Activated naive CD8-positive, alpha-beta T cell treated with anti-CD3 and anti-CD28 coated beads, Interleukin-2, amount 10 ng/mL, durations not matched to agents 7 days and 5 days (primary cell): ENCODE measurements at regions of chrX and their contacts with region 1.

Region 1: DNA sequence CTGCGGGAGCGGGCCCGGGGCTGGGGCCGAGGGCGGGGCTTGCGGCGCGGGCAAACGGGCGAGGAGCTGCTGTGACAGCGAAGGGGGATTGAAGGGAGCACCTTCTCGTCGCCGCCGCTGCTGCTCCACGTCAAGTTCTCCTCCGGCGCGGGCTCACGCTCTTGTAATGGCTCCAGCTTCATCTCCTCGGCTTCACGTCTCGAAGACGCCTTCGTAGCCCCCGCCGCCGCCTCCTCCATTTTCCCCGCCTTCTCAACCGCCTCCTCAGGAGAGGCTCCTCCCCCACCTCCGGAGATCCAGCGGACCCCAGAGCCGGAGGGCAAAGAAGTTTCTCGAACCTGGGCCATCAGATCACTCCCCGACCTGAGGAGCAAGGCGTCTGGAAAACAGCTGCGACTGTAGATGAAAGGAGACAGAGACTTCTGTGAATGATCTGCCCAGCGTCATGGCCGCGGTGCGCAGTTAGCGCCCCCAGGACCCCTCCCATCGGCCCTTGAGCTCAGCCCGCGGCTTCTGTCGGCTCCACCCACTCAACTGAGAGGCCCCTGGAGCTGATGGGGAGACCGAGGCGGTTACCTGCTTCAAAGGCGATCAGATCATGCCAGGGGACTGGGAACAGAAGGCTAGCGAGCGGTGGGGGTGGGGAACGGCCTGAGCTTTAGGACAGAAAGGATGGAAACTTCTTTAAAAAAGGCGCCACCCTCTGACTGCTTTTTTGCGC is 895 bp downstream of the USP51 start:
- DNase-seq: peak; percentile 71
- ATAC-seq: peak; percentile 76
- H3K4me3 Mint-ChIP-seq: peak overlapping the region; percentile 93
- H3K27ac Mint-ChIP-seq: peak overlapping the region; percentile 90
- H3K4me1 Mint-ChIP-seq: peaks cover 8% of the 10 kb centered on the region
- H3K27me3 Mint-ChIP-seq: no peaks in the 10 kb centered on the region

Region 2: GRCh38 chrX:55451990-55452832 is 36.5 kb before region 1 on chrX and contains the start of gene MAGEH1:
- POLR2A ChIA-PET with region 1: interaction called, 18 read pairs
- DNase-seq: peak; percentile 71
- ATAC-seq: peak; percentile 97
- H3K4me3 Mint-ChIP-seq: peak within 1 kb of the TSS; percentile 95
- H3K27ac Mint-ChIP-seq: peak within 1 kb of the TSS; percentile 87
- H3K4me1 Mint-ChIP-seq: peaks cover 7% of the 10 kb centered on the region
- H3K27me3 Mint-ChIP-seq: no peaks in the 10 kb centered on the region
- total RNA-seq, gene MAGEH1: 16.0 to 17.9 TPM

Region 3: GRCh38 chrX:55717521-55718497 is 229.1 kb after region 1 on chrX and contains the start of gene RRAGB:
- POLR2A ChIA-PET with region 1: interaction called, 11 read pairs
- DNase-seq: peak; percentile 87
- ATAC-seq: peak; percentile 98
- H3K4me3 Mint-ChIP-seq: peak within 1 kb of the TSS; percentile 88
- H3K27ac Mint-ChIP-seq: peak within 1 kb of the TSS; percentile 89
- H3K4me1 Mint-ChIP-seq: peaks cover 17% of the 10 kb centered on the region
- H3K27me3 Mint-ChIP-seq: no peaks in the 10 kb centered on the region
- total RNA-seq, gene RRAGB: 10.5 to 13.3 TPM

Region 4: DNA sequence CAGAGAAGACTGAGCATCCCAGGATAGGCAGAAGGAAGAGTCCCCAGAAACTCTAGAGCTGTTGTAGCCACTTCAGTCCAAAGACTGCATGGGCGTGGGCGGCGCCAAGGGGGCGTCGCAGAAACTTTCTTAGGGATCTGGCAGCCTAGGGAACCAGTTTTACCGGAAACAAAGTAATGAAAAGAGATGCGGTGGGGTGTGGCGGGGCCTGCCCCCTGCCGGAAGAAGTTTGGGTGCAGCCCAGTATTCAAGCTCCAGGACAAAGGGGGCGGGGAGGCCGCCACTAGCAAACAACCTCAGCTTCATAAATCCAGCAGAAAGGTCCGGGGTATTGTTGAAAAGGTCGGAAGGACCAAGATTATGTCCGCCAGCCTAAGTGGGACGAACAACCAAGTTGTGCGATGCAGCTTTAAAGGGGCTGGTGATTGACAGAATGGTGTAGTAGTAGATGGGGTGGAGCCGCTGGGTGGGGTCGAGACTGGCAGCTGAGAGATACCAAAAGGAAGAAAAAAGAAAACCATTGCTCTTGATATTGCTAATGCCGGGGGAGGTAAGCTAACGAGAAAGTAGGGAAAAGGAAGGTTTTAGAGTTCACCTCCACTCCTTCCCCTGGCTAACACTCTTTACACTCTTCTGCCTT is 419.3 kb after region 1 on chrX:
- POLR2A ChIA-PET with region 1: interaction called, 11 read pairs
- DNase-seq: peak; percentile 72
- ATAC-seq: peak; percentile 77
- H3K4me3 Mint-ChIP-seq: peak overlapping the region; percentile 85
- H3K27ac Mint-ChIP-seq: peak overlapping the region; percentile 85
- H3K4me1 Mint-ChIP-seq: peaks cover 9% of the 10 kb centered on the region
- H3K27me3 Mint-ChIP-seq: no peaks in the 10 kb centered on the region